Activated CD4-positive, alpha-beta T cell treated with anti-CD3 and anti-CD28 coated beads, Interleukin-2, amount 10 ng/mL, durations not matched to agents 24 days and 14 days (primary cell): ENCODE measurements at regions of chrX and their contacts with region 1.

Region 1: GRCh38 chrX:130916636-130917422 is 13.8 kb upstream of the ENOX2 start:
- DNase-seq: peak; percentile 72
- H3K4me3 Mint-ChIP-seq: no peak overlapping the region
- H3K27ac Mint-ChIP-seq: no peak overlapping the region
- H3K4me1 Mint-ChIP-seq: no peaks in the 10 kb centered on the region
- H3K27me3 Mint-ChIP-seq: peaks cover 3% of the 10 kb centered on the region

Region 2: GRCh38 chrX:130330706-130331105 is 586.1 kb before region 1 on chrX:
- intact Hi-C with region 1: loop called (anchors 5 kb)
- DNase-seq: peak; percentile 74
- H3K4me3 Mint-ChIP-seq: no peak overlapping the region
- H3K27ac Mint-ChIP-seq: no peak overlapping the region
- H3K4me1 Mint-ChIP-seq: no peaks in the 10 kb centered on the region
- H3K27me3 Mint-ChIP-seq: peaks cover 9% of the 10 kb centered on the region

Region 3: DNA sequence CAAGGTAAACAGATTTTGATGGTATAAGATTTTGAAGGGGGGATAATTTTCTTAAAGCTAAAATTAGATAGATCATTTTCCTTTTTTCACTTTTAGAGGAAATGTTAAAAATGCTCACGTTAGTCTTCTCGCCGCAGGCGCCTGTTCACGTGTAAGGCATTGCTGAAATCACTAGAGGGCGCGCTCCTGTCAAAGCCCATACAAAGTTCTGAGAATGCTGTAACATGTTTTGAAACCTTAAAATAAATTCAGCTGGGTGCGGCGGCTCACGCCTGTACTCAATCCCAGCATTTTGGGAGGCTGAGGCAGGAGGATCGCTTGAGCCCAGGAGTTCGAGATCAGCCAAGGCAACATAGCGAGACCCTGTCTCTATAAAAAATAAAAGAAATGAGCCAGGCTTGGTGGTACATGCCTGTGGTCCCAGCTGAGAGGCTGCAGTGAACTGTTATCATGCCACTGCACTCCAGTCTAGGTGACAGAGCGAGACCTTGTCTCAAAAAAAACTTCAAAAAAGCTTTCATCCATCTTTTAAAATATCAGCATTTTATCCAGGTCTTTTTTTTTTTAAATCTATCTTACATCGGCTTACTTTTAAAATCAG is 377.0 kb before region 1 on chrX:
- intact Hi-C with region 1: loop called (anchors 1 kb)
- DNase-seq: peak; percentile 77
- H3K4me3 Mint-ChIP-seq: no peak overlapping the region
- H3K27ac Mint-ChIP-seq: no peak overlapping the region
- H3K4me1 Mint-ChIP-seq: no peaks in the 10 kb centered on the region
- H3K27me3 Mint-ChIP-seq: no peaks in the 10 kb centered on the region

Region 4: GRCh38 chrX:130575831-130576389 is 340.9 kb before region 1 on chrX:
- intact Hi-C with region 1: loop called (anchors 2 kb)
- DNase-seq: peak; percentile 62
- H3K4me3 Mint-ChIP-seq: no peak overlapping the region
- H3K27ac Mint-ChIP-seq: no peak overlapping the region
- H3K4me1 Mint-ChIP-seq: no peaks in the 10 kb centered on the region
- H3K27me3 Mint-ChIP-seq: peaks cover 3% of the 10 kb centered on the region

Region 5: GRCh38 chrX:130680164-130681035 is 236.4 kb before region 1 on chrX:
- intact Hi-C with region 1: no loop called
- DNase-seq: no peak
- H3K4me3 Mint-ChIP-seq: no peak overlapping the region
- H3K27ac Mint-ChIP-seq: no peak overlapping the region
- H3K4me1 Mint-ChIP-seq: no peaks in the 10 kb centered on the region
- H3K27me3 Mint-ChIP-seq: no peaks in the 10 kb centered on the region

Region 6: DNA sequence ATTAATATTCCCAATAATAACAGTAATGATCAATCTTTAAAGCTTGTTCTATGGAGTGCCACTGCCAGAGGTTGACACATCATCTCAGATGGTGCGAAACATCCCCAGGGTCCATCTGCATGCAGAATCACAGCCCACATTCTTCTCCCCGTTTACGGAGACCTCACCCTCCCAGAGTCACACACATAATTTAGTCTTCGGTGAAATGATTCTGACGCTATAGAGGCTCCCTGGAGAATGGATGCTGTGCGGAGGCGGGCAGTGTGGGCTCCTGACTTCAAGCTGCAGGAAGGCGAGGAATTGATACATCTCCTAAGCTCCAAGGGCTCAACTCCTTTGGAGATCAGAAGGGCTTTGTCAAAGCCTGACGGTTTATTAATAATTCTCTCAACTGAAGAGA is 130.4 kb after region 1 on chrX:
- intact Hi-C with region 1: no loop called
- DNase-seq: no peak
- H3K4me3 Mint-ChIP-seq: no peak overlapping the region
- H3K27ac Mint-ChIP-seq: no peak overlapping the region
- H3K4me1 Mint-ChIP-seq: no peaks in the 10 kb centered on the region
- H3K27me3 Mint-ChIP-seq: peaks cover 6% of the 10 kb centered on the region